AG04450 (cell line): ENCODE measurements at regions of chr16 and their contacts with region 1.

Region 1: DNA sequence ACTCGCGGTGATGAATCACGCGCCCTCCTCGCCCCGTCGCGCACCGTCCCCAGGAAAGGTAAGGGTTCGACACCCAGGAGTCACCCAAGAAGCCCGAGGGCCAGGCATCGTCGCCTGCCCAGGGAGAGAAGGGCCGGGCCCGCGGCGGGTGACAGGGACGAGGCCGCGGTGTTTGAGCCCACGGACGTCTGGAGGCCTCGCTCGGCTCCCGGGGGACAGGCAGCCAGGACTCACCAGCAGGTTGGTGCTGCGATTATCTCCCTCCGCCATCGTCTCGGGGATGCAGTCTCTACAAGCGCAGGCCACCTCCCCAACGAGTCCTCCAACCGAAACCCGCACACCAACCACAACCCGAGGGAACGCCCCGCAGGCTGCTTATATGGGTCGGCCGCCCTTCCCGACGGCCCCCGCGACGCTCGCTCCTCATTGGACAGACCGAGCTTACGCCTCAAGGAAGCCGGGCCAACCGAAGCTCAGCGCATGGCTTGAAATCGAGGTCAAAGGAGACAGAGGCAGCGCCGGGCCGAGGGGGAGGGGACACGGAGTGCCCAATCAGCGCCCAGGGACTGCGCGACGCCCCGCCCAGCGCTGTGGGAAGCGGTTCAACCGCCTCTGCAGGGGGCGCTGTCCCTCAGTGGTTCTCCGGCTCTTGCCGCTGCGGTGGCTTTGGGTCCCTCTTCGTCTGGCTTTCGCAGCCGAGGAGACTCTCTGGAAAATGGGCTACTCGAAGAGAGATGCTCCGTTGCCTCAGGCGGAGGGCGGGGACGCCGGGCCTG is at the start of gene ARL6IP1:
- DNase-seq: peak; percentile 99
- H3K4me3 ChIP-seq: peak within 1 kb of the TSS; percentile 93
- H3K27ac ChIP-seq: peak within 1 kb of the TSS; percentile 85
- H3K27me3 ChIP-seq: no peaks in the 10 kb centered on the region
- CTCF ChIP-seq: peak; percentile 86
- polyA plus RNA-seq, gene ARL6IP1: 129 and 155 TPM in 2 replicates

Region 2: DNA sequence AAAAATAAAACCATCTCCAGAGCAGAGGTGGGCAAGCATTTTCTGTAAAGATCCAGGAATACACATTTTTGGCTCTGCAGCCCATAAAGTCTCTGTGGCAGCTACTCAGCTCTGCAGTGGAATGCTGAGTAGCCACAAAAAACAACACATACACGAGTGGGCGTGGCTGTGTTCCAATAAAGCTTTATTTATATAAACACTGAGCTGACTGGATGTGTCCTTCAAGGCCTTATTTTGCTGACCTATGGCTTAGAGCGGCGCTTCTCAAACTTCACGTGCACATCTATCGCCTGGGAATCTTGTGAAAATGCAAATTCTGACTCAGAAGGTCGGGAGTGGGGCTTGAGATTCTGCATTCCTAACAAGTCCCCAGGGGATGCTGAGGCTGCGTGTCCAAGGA is 1370.4 kb before region 1 on chr16:
- CTCF ChIA-PET with region 1: no interaction called
- POLR2A ChIA-PET with region 1: no interaction called
- DNase-seq: no peak
- H3K4me3 ChIP-seq: no peak overlapping the region
- H3K27ac ChIP-seq: no peak overlapping the region
- H3K27me3 ChIP-seq: no peaks in the 10 kb centered on the region
- CTCF ChIP-seq: no peak

Region 3: DNA sequence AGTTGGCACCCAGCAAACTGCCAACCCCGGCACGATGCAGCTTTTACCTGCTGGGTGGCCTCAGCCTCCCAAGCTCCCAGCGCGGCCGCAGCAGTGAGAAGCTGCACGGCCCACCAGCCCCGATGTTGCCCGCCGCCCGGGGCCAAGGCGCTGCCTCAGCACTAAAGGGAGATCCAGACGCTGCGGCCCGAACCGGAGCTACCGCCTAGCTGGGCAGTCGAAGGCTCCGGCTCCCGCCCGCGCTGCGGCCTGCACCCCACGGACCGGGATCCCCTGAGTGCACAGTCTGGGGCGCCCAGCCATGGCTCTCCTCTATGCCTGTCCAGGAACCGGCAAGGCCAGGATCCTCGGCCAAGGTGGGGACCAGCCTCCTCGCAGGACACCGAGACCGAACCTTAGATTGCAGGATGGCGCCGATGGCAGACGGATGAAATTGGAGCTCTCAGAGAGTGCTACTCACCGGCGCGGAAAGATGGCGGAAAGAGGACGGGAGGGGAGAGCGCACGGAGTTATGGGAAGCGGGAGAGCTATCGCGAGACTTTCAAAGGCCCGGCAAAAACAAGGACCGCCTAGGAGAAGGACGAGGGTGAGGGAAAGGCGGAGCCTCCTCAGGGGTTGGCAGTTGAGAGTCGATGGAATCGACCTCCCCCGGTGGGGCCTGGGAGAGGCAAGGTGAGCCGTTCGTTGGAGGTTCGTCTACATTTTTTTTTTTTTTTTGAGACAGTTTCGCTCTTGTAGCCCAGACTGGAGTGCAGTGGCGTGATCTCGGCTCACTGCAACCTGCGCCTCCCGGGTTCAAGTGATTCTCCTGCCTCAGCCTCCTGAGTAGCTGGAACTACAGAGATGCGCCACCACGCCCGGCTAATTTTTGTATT is 11.3 kb before region 1 on chr16 and contains the start of gene RPS15A:
- CTCF ChIA-PET with region 1: interaction called, 35 read pairs
- POLR2A ChIA-PET with region 1: interaction called, 133 read pairs
- DNase-seq: peak; percentile 95
- H3K4me3 ChIP-seq: peak within 1 kb of the TSS; percentile 99
- H3K27ac ChIP-seq: peak within 1 kb of the TSS; percentile 76
- H3K27me3 ChIP-seq: no peaks in the 10 kb centered on the region
- CTCF ChIP-seq: no peak
- polyA plus RNA-seq, gene RPS15A: 3,840 and 3,917 TPM in 2 replicates

Region 4: GRCh38 chr16:18816286-18816685 is 14.9 kb after region 1 on chr16:
- CTCF ChIA-PET with region 1: interaction called, 54 read pairs
- POLR2A ChIA-PET with region 1: interaction called, 8 read pairs
- DNase-seq: no peak
- H3K4me3 ChIP-seq: no peak overlapping the region
- H3K27ac ChIP-seq: no peak overlapping the region
- H3K27me3 ChIP-seq: no peaks in the 10 kb centered on the region
- CTCF ChIP-seq: no peak

Region 5: GRCh38 chr16:18846416-18846815 is 45.0 kb after region 1 on chr16:
- CTCF ChIA-PET with region 1: interaction called, 19 read pairs
- POLR2A ChIA-PET with region 1: interaction called, 5 read pairs
- DNase-seq: no peak
- H3K4me3 ChIP-seq: no peak overlapping the region
- H3K27ac ChIP-seq: no peak overlapping the region
- H3K27me3 ChIP-seq: no peaks in the 10 kb centered on the region
- CTCF ChIP-seq: no peak

Region 6: DNA sequence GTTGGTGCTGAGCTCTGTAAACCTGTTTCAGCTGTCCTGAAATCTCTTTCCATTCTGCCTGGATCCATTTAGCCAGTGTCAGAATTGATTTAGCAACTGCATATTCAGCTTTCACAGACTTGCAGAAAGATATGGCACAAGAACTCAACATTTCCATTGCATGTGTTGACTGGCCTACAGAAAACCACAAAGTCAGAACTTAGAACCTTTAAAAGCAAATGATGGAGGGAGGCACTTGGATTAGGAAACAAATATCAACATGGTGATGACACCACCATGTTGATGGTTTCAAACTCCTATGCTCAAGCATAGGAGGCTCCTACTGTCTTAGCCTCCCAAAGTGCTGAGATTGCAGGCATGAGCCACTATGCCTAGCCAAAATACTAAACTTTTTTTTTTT is 52.3 kb after region 1 on chr16:
- CTCF ChIA-PET with region 1: interaction called, 19 read pairs
- POLR2A ChIA-PET with region 1: no interaction called
- DNase-seq: no peak
- H3K4me3 ChIP-seq: no peak overlapping the region
- H3K27ac ChIP-seq: no peak overlapping the region
- H3K27me3 ChIP-seq: no peaks in the 10 kb centered on the region
- CTCF ChIP-seq: no peak

Region 7: DNA sequence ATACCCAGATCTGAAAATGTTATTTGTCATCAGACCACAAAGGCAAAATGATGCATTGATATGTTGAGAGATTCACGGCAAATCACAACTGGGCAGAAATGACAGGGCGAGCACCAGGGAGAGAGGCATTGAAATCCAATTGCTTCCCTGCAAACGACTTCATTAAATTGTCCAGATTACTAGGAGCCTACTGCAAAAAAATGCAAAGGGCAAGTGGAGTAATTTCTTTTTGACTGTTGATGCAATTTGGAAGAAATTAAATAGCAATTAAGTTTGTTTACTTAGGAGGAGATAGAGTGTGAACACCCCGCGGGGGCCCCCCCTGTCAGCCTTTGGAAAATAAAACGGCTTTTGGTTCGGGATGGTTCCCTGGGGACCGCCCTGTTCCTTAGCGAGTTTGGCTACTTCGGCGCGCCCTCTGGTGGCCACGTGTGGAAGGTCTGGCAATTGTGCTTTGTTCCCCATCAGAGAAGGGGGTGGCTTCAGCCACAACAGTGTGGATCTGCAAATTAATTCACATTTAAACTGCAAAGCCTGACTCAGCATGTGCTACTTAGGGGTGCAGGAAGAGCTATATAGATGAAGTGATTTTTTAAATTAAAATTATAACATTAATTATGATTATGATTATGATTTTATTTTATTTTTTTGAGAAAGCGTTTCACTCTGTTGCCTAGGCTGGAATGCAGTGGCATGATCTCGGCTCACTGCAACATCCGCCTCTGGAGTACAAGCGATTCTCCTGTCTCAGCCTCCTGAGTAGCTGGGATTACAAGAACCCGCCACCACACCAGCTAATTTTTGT is 167.9 kb after region 1 on chr16:
- CTCF ChIA-PET with region 1: interaction called, 19 read pairs
- POLR2A ChIA-PET with region 1: no interaction called
- DNase-seq: peak; percentile 23
- H3K4me3 ChIP-seq: peak overlapping the region; percentile 38
- H3K27ac ChIP-seq: no peak overlapping the region
- H3K27me3 ChIP-seq: peaks cover 4% of the 10 kb centered on the region
- CTCF ChIP-seq: peak; percentile 93

Region 8: DNA sequence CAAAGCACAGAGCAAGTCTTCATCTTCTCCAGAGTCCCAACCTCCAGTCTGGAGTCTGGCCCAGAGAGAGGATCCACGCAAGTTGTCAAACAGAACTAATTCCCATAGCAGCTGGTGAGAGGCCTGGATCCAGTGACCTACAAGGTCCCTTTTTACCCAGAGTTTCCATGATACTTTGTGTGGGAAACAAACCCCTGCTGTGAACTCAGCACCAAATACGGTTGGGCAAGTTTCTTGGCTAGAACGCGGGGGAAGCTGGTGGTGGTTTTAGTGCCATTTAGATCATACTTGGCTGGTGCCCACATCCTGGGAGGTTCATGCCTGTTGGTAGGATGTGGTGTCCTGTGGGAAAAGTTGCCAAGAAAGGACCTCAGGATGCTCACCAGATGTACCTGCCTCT is 200.4 kb after region 1 on chr16:
- CTCF ChIA-PET with region 1: no interaction called
- POLR2A ChIA-PET with region 1: interaction called, 14 read pairs
- DNase-seq: no peak
- H3K4me3 ChIP-seq: no peak overlapping the region
- H3K27ac ChIP-seq: no peak overlapping the region
- H3K27me3 ChIP-seq: no peaks in the 10 kb centered on the region
- CTCF ChIP-seq: no peak

Region 9: DNA sequence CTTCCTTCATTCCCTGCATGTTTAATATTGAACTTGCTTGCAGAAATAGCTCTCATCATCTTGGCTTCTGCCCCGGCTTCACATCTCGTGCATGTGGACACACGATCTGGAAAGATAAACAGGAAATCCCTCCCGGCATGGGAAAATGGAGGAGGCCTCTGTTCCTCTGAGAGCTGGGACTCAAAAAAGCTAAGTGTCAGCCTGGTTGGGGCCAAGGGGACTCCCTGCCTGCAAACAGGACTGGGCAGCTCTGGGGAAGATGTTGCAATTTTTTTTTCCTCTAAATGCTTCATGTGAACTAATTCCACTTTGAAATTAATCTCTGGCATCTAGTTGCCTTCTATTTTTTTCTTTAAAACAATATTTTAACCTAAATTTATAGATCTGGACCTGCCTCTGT is 337.2 kb after region 1 on chr16:
- CTCF ChIA-PET with region 1: no interaction called
- POLR2A ChIA-PET with region 1: no interaction called
- DNase-seq: peak; percentile 73
- H3K4me3 ChIP-seq: no peak overlapping the region
- H3K27ac ChIP-seq: peak overlapping the region; percentile 59
- H3K27me3 ChIP-seq: peaks cover 2% of the 10 kb centered on the region
- CTCF ChIP-seq: no peak